ENCODE measurements at regions of chr17 and their contacts with region 1.

Region 1: DNA sequence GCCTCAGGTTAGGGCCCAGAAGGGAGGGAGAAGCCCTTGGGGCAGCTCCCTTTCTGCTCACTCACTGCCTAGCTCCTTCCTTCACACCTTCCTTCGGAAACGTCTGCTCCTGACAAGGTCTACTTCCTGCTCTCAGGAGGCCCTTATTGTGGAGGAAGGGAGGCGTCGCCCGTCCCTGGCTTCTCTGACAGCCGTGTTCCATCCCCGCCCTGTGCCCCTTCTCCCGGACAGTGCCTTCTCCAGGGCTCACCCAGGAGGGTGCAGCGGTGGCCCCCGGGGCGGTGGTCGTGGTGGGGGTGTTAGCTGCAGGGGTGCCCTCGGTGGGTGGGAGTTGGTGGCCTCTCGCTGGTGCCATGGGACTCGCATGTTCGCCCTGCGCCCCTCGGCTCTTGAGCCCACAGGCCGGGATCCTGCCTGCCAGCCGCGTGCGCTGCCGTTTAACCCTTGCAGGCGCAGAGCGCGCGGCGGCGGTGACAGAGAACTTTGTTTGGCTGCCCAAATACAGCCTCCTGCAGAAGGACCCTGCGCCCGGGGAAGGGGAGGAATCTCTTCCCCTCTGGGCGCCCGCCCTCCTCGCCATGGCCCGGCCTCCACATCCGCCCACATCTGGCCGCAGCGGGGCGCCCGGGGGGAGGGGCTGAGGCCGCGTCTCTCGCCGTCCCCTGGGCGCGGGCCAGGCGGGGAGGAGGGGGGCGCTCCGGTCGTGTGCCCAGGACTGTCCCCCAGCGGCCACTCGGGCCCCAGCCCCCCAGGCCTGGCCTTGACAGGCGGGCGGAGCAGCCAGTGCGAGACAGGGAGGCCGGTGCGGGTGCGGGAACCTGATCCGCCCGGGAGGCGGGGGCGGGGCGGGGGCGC is 231.9 kb downstream of the SEC14L1 start:
- DNase-seq: peak; percentile 59 to 90
- H3K4me3 ChIP-seq: peak overlapping the region; percentile 80 to 84
- H3K27ac ChIP-seq: peak overlapping the region; percentile 92
- H3K4me1 ChIP-seq: peaks cover 29 to 53% of the 10 kb centered on the region in 2 donors
- H3K27me3 ChIP-seq: no peaks in the 10 kb centered on the region
- CTCF ChIP-seq: no peak

Region 2: DNA sequence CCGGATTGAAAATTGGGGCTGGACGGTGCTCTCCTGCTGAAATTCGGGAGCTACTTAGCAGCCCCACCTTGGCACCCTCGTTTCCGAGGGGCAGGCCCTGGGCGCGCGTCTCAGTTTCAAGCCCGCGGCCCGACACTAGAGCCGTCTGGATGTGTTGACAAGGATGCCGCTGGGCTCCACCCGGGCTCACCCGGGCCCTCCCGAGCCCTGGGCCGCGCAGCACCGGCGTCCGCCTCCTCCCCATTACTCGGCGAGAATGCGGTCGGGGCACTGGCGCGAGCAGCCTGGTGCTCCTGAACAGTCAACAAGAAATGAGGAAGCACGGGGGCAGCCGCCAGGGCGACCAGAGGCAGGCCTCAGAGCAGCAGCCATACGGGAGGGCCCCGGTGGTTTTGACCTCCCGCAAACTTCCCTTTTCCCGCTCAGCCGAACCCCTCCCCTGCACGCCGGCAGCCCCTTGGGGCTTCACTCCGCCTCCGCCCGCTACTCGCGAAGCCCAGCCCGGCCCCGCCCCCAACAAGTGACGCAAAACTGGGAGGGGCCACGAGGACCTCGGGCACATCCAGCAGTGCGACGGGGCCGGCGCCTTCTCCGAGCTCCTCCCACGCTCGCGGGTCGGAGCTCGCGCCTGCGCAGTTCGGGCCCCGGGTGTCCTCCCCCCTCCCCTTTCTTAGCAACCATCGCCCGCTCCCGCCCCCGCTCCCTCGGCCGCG is 232.3 kb before region 1 on chr17:
- intact Hi-C with region 1: no loop called
- DNase-seq: peak; percentile 95 to 100
- H3K4me3 ChIP-seq: peak overlapping the region; percentile 92 to 93
- H3K27ac ChIP-seq: peak overlapping the region; percentile 93
- H3K4me1 ChIP-seq: peaks cover 0 to 8% of the 10 kb centered on the region in 2 donors
- H3K27me3 ChIP-seq: no peaks in the 10 kb centered on the region
- CTCF ChIP-seq: no peak

Region 3: GRCh38 chr17:77331301-77331864 is 41.3 kb before region 1 on chr17:
- intact Hi-C with region 1: loop called (anchors 1 kb)
- DNase-seq: peak; percentile 74 to 97
- H3K4me3 ChIP-seq: peak overlapping the region in 1 of 2 donors; percentile 25
- H3K27ac ChIP-seq: no peak overlapping the region
- H3K4me1 ChIP-seq: peaks cover 0 to 6% of the 10 kb centered on the region in 2 donors
- H3K27me3 ChIP-seq: no peaks in the 10 kb centered on the region
- CTCF ChIP-seq: peak; percentile 92 to 99 (median 94)

Region 4: GRCh38 chr17:77404812-77405581 is 32.3 kb after region 1 on chr17:
- intact Hi-C with region 1: loop called (anchors 2 kb)
- DNase-seq: peak; percentile 67 to 91
- H3K4me3 ChIP-seq: peak overlapping the region in 1 of 2 donors; percentile 7
- H3K27ac ChIP-seq: peak overlapping the region; percentile 88 to 91
- H3K4me1 ChIP-seq: peaks cover 45 to 66% of the 10 kb centered on the region in 2 donors
- H3K27me3 ChIP-seq: no peaks in the 10 kb centered on the region
- CTCF ChIP-seq: no peak

Region 5: DNA sequence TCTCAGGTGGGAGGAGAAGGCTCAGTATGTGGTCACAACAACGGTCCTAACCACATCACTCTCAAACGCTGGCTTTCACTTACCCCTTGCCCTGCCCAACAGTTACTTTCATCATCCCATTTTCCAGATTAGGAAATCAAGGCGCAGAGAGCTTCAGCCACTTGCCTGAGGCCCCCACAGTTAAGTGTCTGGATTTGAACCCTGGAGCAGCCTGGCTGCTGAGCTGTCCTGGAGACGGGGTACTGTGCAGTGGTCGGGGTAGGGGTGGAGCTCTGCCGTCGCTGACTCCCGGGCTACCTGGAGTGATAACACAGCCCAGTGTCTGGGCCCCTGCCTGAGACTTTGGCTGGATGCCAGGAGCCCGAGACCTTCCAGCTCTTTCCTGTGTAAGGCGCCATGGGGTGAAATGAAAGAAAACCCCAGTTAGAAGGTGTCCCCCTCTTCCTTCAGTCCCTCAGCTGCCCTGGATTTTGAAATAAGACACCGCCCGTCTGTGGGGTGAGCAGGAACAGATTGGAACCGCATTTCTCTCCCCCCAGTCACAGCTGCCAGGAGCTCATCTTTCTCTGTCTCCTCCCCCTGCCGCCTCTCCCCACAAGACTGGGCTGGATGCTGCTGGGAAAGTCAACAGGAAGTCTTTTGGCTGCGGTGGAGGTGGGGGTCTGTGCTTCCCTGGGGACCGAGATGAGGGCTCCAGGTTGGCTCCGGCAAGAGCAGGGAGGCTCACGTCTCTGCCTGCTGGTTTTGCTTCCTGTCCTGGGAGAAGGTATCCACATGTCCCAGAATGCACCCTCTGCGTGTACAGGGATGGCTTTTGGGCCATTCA is 48.3 kb after region 1 on chr17:
- intact Hi-C with region 1: loop called (anchors 2 kb)
- DNase-seq: no peak
- H3K4me3 ChIP-seq: no peak overlapping the region
- H3K27ac ChIP-seq: peak overlapping the region in 1 of 2 donors; percentile 41
- H3K4me1 ChIP-seq: peaks cover 16 to 46% of the 10 kb centered on the region in 2 donors
- H3K27me3 ChIP-seq: no peaks in the 10 kb centered on the region
- CTCF ChIP-seq: no peak

Region 6: GRCh38 chr17:77476931-77477877 is 104.5 kb after region 1 on chr17:
- intact Hi-C with region 1: loop called (anchors 5 kb)
- DNase-seq: peak; percentile 73 to 96
- H3K4me3 ChIP-seq: peak overlapping the region in 1 of 2 donors; percentile 14
- H3K27ac ChIP-seq: peak overlapping the region; percentile 84 to 92
- H3K4me1 ChIP-seq: peaks cover 21 to 48% of the 10 kb centered on the region in 2 donors
- H3K27me3 ChIP-seq: no peaks in the 10 kb centered on the region
- CTCF ChIP-seq: peak in 1 of 3 experiments; percentile 12